Left colon (tissue), 2 donors: ENCODE measurements at regions of chr17 and their contacts with region 1.

Region 1: DNA sequence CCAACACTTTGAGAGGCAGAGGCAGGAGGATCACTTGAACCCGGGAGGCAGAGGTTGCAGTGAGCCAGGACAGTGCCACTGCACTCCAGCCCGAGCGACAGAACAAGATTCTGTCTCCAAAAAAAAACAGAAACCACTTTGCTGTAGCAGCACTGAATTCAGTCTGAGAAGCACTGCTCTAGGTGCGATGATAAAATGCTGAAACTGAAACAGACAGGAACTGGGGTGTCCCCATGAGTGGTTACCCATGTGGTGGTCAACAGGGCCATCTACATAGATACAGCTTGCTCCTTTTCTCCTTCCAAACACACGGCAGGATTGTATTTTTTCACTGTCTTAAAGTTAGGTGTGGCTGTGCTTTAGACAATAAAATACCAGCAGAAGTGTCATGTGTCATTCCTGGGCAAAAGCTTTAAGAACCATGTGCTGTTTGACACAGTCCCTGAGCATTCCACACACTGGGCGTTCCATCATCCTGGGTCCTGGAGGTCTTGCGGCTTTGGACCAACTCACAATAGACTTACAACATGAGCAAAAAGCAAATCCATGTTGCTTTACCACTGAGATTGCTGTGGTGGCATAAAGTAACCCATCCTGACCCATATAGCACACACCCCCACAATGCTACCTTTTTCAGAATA is 11.5 kb downstream of the GAS7 start:
- DNase-seq: no peak
- ATAC-seq: no peak

Region 2: DNA sequence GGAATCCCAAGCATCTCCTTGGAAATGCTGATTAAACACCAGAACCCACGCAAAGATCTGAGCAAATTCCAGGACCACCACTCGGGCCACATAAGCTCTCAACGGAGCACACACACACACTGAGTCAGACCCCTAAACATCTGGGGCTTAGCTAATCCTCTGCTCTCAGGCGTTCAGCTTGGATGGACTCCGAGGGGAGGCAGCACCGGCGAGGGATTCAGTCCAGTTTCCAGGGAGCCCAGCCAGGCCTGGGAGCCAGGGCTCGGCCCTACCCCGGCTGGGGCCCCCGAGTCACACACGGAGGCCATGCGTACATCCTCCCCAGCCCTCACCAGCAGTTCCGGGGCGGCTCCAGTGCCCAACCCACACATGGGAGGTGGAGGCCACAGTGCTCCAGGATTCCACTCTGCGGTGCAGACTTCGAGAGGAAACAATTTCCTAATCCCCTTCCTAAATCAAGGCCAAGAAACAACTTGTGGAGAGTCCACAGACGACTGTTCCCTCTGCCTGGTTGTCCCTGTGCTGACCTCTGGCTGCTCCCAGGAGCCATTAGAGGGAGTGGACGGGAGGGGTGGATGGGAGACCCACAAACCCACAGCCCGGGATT is 59.0 kb before region 1 on chr17:
- intact Hi-C with region 1: loop called in 1 of 2 experiments (anchors 10 kb)
- DNase-seq: peak; percentile 50 to 58
- ATAC-seq: peak; percentile 28

Region 3: DNA sequence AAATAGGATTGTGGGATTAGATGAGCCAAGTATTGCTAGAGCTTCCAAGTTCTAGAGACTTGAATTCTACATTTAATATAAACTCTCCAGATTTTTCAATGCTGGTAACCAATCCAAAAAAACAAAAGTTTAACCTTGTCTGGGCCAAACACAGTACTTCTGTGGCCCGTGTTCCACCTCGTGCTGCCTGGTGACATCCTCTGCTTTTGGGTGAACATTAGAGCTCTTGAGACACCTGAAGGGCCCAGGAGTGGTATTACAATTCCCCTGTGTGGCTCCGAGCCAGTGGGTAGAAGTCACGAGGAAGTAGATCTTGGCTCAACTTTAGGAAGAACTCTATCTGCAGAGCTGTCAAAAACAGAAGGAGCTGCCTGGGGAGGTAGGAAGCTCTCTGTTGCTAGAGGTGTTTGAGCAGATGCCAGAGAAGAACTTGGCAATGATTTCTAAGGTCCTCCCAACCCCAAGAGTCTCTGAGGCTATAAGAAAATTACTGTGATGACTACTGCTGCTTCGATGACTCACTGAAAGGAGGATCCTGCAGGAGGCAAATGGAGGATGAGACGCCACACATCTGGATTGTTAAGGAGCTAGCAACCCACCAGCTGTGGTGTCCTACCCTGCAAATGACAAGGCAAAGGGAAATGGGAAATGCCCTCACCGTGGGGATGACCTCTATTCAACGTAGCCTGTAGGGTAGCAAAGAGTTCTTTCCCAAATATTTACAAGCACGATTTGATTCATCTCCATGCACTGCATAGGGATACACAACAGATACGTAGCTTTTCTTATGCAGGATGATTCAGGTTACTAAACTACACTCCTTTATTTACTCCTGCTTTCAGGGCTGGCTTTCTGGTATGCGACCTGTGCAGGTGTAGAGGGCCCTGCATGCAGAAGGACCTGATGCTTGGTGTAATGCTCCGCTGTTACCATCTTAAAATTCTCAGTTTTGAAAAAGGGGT is 57.3 kb after region 1 on chr17:
- intact Hi-C with region 1: no loop called
- DNase-seq: no peak
- ATAC-seq: no peak

Region 4: GRCh38 chr17:10327640-10328039 is 140.7 kb after region 1 on chr17:
- intact Hi-C with region 1: no loop called
- DNase-seq: peak; percentile 53 to 90
- ATAC-seq: peak; percentile 83

Region 5: DNA sequence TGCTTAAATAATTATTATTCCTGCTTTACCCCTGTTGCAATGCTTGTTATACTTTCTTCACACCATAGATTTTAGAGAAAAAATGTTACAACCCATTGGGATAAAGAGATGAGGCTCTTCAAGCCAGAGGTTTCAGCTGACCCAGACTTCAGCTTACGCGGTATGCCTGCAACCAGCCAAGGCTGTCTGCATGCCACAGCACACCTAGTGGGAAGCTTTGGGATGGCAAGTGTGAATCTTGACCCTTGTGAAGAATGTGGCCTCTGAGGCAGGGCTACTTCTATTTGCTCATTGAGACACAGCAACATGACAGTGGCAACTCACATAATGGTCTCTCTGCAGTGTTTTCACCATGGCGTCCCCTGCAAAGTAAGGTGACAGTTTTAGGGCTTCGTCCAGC is 844.9 kb after region 1 on chr17:
- intact Hi-C with region 1: no loop called
- DNase-seq: no peak
- ATAC-seq: no peak